Caco-2 (cell line): ENCODE measurements at regions of chr2 and their contacts with region 1.

Region 1: GRCh38 chr2:238263204-238264071 is 23.6 kb upstream of the HES6 start:
- DNase-seq: peak; percentile 84 to 92
- H3K4me3 ChIP-seq: no peak overlapping the region
- H3K4me3 Mint-ChIP-seq: peak overlapping the region; percentile 53
- H3K27ac Mint-ChIP-seq: peak overlapping the region; percentile 40
- H3K4me1 ChIP-seq: peaks cover 5% of the 10 kb centered on the region
- H3K4me1 Mint-ChIP-seq: no peaks in the 10 kb centered on the region
- H3K27me3 ChIP-seq: no peaks in the 10 kb centered on the region
- H3K27me3 Mint-ChIP-seq: no peaks in the 10 kb centered on the region
- CTCF ChIP-seq: peak; percentile 39 to 72

Region 2: GRCh38 chr2:237858294-237859081 is 404.9 kb before region 1 on chr2:
- CTCF ChIA-PET with region 1: interaction called, 11 read pairs
- POLR2A ChIA-PET with region 1: no interaction called
- intact Hi-C with region 1: loop called (anchors 2 kb)
- DNase-seq: peak; percentile 69 to 71
- H3K4me3 ChIP-seq: peak overlapping the region; percentile 44
- H3K4me3 Mint-ChIP-seq: peak overlapping the region; percentile 67
- H3K27ac Mint-ChIP-seq: no peak overlapping the region
- H3K4me1 ChIP-seq: peaks cover 28% of the 10 kb centered on the region
- H3K4me1 Mint-ChIP-seq: peaks cover 6% of the 10 kb centered on the region
- H3K27me3 ChIP-seq: no peaks in the 10 kb centered on the region
- H3K27me3 Mint-ChIP-seq: peaks cover 7% of the 10 kb centered on the region
- CTCF ChIP-seq: peak; percentile 66 to 77

Region 3: DNA sequence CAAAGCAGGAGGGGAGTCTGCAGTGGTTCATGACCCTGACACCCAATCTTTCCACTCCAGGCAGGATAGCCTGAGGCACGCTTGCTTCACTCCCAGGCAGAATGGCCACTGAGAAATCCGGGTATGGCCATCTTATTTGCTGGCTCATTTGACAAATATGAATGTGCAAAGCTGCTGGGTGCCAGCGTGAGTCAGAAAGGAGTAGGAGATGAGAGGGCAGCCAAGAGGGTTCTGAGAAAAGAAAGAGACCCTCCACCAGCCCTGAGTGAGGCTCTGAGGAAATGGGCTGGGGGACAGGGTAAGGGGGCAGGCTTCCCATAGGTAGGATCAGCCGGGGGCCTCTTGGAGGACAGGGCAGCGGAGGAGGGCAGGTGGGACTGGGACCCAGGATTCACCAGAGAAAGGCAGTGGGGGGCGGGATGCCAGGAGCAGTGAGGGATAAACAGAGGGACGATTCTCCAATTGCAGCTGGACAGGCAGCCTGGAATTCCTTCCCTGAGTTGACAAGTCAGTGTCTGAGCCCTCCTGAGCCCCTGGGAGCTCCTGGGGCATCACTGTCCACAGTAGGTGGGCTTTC is 388.8 kb before region 1 on chr2:
- CTCF ChIA-PET with region 1: no interaction called
- POLR2A ChIA-PET with region 1: no interaction called
- intact Hi-C with region 1: no loop called
- DNase-seq: no peak
- H3K4me3 ChIP-seq: no peak overlapping the region
- H3K4me3 Mint-ChIP-seq: no peak overlapping the region
- H3K27ac Mint-ChIP-seq: no peak overlapping the region
- H3K4me1 ChIP-seq: no peaks in the 10 kb centered on the region
- H3K4me1 Mint-ChIP-seq: no peaks in the 10 kb centered on the region
- H3K27me3 ChIP-seq: no peaks in the 10 kb centered on the region
- H3K27me3 Mint-ChIP-seq: no peaks in the 10 kb centered on the region
- CTCF ChIP-seq: no peak

Region 4: DNA sequence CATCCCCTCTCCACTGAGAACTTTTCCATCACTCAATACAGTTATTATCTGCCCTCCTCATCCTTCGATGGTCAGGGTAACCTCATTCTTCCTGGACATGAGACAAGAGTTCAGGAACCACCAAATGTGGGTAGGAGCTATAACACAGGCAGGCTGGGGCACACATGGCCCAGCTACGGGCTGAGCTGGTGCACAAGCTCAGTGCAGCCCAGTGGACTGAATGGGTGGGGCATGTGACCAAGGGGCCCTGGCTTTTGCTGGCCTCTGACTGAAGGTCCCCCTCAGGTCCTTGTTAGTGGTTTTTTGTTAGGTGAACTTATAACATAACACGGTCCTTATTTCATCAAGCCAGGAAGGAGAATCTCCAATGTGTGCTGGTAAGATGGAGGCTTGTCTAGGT is 332.9 kb before region 1 on chr2:
- CTCF ChIA-PET with region 1: interaction called, 10 read pairs
- POLR2A ChIA-PET with region 1: no interaction called
- intact Hi-C with region 1: no loop called
- DNase-seq: no peak
- H3K4me3 ChIP-seq: no peak overlapping the region
- H3K4me3 Mint-ChIP-seq: no peak overlapping the region
- H3K27ac Mint-ChIP-seq: no peak overlapping the region
- H3K4me1 ChIP-seq: no peaks in the 10 kb centered on the region
- H3K4me1 Mint-ChIP-seq: no peaks in the 10 kb centered on the region
- H3K27me3 ChIP-seq: no peaks in the 10 kb centered on the region
- H3K27me3 Mint-ChIP-seq: no peaks in the 10 kb centered on the region
- CTCF ChIP-seq: no peak

Region 5: DNA sequence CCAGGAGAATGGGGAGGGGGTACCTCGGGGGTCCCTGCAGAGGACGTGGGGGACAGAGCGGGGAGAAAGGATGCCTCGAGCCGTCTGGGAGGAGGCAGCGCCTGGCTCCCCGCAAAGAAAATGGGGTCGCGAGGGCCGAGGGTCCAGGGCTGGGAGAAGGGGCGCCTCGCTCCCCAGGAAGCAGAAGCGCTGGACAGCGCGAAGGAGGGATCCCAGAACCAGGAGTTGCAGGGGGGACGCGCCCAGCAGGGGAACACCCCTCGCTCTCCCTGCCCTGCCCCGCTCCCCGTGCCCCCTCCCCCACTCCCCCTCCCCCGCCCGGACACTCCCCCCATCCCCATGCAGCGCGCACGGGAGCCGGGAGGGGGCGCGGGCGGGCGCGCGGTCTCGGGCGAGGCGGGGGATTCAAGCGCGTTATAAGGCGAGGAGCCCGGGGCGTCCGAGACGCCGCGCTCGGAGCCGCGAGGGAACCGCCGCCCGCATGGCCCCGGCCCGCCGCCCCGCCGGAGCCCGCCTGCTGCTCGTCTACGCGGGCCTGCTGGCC is 104.8 kb before region 1 on chr2 and contains the start of gene ERFE:
- CTCF ChIA-PET with region 1: interaction called, 6 read pairs
- POLR2A ChIA-PET with region 1: no interaction called
- intact Hi-C with region 1: loop called (anchors 2 kb)
- DNase-seq: peak in 1 of 2 experiments; percentile 73
- H3K4me3 ChIP-seq: peak within 1 kb of the TSS; percentile 29
- H3K4me3 Mint-ChIP-seq: peak within 1 kb of the TSS; percentile 64
- H3K27ac Mint-ChIP-seq: no peak within 1 kb of the TSS
- H3K4me1 ChIP-seq: no peaks in the 10 kb centered on the region
- H3K4me1 Mint-ChIP-seq: no peaks in the 10 kb centered on the region
- H3K27me3 ChIP-seq: no peaks in the 10 kb centered on the region
- H3K27me3 Mint-ChIP-seq: no peaks in the 10 kb centered on the region
- CTCF ChIP-seq: peak; percentile 21 to 45
- total RNA-seq, gene ERFE: 1.4 and 1.6 TPM in 2 replicates

Region 6: GRCh38 chr2:238239872-238240751 is 23.3 kb before region 1 on chr2 and contains the start of gene HES6:
- CTCF ChIA-PET with region 1: interaction called, 13 read pairs
- POLR2A ChIA-PET with region 1: interaction called, 5 read pairs
- intact Hi-C with region 1: no loop called
- DNase-seq: peak; percentile 83 to 89
- H3K4me3 ChIP-seq: peak within 1 kb of the TSS; percentile 75
- H3K4me3 Mint-ChIP-seq: peak within 1 kb of the TSS; percentile 98
- H3K27ac Mint-ChIP-seq: peak within 1 kb of the TSS; percentile 84
- H3K4me1 ChIP-seq: no peaks in the 10 kb centered on the region
- H3K4me1 Mint-ChIP-seq: no peaks in the 10 kb centered on the region
- H3K27me3 ChIP-seq: no peaks in the 10 kb centered on the region
- H3K27me3 Mint-ChIP-seq: no peaks in the 10 kb centered on the region
- CTCF ChIP-seq: no peak
- total RNA-seq, gene HES6: 21.2 and 22.1 TPM in 2 replicates

Region 7: GRCh38 chr2:238305092-238305862 is 41.8 kb after region 1 on chr2:
- CTCF ChIA-PET with region 1: interaction called, 12 read pairs
- POLR2A ChIA-PET with region 1: no interaction called
- intact Hi-C with region 1: no loop called
- DNase-seq: no peak
- H3K4me3 ChIP-seq: no peak overlapping the region
- H3K4me3 Mint-ChIP-seq: no peak overlapping the region
- H3K27ac Mint-ChIP-seq: no peak overlapping the region
- H3K4me1 ChIP-seq: peaks cover 14% of the 10 kb centered on the region
- H3K4me1 Mint-ChIP-seq: peaks cover 6% of the 10 kb centered on the region
- H3K27me3 ChIP-seq: no peaks in the 10 kb centered on the region
- H3K27me3 Mint-ChIP-seq: no peaks in the 10 kb centered on the region
- CTCF ChIP-seq: peak in 1 of 2 experiments; percentile 41